ENCODE measurements at regions of chr12 and their contacts with region 1.

Region 1: DNA sequence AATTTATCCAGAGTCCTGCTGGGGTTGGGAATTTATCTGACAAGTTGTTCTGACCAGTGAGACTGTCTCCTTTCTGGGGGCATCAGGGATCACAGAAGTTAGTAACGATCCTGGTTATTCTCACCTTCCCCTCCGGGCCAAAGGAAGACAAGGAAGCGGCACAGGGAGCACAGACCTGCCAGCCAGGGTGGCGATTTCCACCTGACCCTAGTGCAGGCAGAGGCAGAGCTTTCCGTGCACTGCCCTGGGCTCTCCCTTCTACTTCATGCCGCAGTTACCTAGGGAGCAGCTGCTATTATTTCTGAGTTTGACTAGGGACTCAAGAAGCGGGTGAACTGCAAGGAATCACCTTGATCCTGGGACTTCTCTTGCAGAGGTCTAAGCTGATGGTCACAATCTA is 7.4 kb downstream of the TMEM106C start:
- DNase-seq: no peak
- H3K4me3 ChIP-seq: no peak overlapping the region
- H3K27ac ChIP-seq: no peak overlapping the region
- H3K4me1 ChIP-seq: no peaks in the 10 kb centered on the region
- H3K27me3 ChIP-seq: no peaks in the 10 kb centered on the region
- CTCF ChIP-seq: no peak

Region 2: GRCh38 chr12:47931172-47931571 is 39.7 kb before region 1 on chr12:
- CTCF ChIA-PET with region 1: no interaction called
- dilution Hi-C with region 1: loop called (anchors 5 kb)
- in situ Hi-C with region 1: no loop called
- intact Hi-C with region 1: no loop called
- DNase-seq: no peak
- H3K4me3 ChIP-seq: no peak overlapping the region
- H3K27ac ChIP-seq: no peak overlapping the region
- H3K4me1 ChIP-seq: no peaks in the 10 kb centered on the region
- H3K27me3 ChIP-seq: no peaks in the 10 kb centered on the region
- CTCF ChIP-seq: no peak